ENCODE measurements at regions of chr16 and their contacts with region 1.

Region 1: DNA sequence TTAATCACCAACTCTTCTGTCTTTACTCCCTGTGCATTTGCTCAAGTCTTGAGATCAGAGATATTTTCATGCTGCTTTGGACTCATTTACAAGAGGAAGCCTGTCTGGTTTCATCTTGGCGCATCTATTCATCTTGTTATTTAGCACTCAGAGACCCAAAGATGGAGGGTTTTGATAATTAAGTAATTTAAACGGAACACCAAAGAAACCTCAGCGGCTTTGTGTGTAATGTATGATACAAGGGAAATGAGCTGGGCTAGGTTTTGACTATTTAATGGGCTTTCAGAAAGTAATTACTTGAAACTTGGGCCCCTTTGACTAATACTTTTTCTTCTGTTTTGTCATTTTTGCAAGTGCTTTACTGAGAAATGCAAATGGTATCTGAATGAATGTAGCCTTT is 66.2 kb upstream of the CACNG3 start:
- DNase-seq: no peak
- ATAC-seq: no peak
- H3K4me3 Mint-ChIP-seq: no peak overlapping the region
- H3K27ac Mint-ChIP-seq: no peak overlapping the region
- H3K4me1 Mint-ChIP-seq: peaks cover 16% of the 10 kb centered on the region
- H3K27me3 Mint-ChIP-seq: no peaks in the 10 kb centered on the region
- CTCF ChIP-seq: no peak

Region 2: DNA sequence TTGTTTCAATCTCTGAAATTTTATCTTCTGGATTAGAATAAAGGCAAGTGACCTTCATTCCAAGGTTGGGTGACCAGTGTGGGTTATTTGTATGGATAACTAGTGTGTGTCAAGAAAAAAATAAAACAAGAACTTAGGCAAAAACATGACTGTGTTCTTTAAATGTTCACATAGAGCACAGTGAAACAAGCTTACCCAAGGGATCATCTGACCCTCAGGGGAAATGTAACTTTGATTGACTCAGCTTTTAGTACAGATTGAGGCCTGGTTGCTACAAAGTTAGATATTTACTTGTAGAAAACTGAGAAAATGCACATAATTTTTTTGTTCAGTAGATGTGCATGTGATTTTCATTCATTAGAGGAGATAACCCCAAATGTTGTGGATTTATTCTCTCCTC is 72.9 kb after region 1 on chr16:
- CTCF ChIA-PET with region 1: no interaction called
- POLR2A ChIA-PET with region 1: no interaction called
- DNase-seq: no peak
- ATAC-seq: no peak
- H3K4me3 Mint-ChIP-seq: no peak overlapping the region
- H3K27ac Mint-ChIP-seq: no peak overlapping the region
- H3K4me1 Mint-ChIP-seq: peaks cover 12% of the 10 kb centered on the region
- H3K27me3 Mint-ChIP-seq: peaks cover 28% of the 10 kb centered on the region
- CTCF ChIP-seq: no peak

Region 3: DNA sequence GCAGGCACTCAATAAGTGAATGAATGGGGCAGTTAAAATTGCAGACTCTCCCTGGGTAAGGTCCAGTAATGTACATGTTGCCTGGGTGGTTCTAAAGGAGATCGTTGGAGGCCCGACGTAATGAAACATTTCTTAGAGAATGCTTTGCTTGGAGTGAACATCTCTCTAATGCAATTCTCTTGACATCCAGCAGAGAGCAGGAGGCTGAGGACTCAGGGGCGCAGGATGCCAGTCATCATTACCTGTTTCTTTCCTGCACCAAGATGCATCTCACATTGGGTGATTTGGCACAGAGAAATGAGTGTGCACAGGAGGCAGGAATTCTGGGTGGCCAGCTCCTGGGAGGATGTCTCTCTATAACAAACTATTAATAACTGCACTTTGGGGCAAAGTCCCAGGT is 219.1 kb after region 1 on chr16:
- CTCF ChIA-PET with region 1: no interaction called
- POLR2A ChIA-PET with region 1: no interaction called
- DNase-seq: no peak
- ATAC-seq: peak; percentile 62
- H3K4me3 Mint-ChIP-seq: no peak overlapping the region
- H3K27ac Mint-ChIP-seq: no peak overlapping the region
- H3K4me1 Mint-ChIP-seq: peaks cover 2% of the 10 kb centered on the region; the same call in 1 of the 2 replicates
- H3K27me3 Mint-ChIP-seq: no peaks in the 10 kb centered on the region; the same call in 1 of the 2 replicates
- CTCF ChIP-seq: peak; percentile 26; the same call in 1 of the 2 replicates

Region 4: DNA sequence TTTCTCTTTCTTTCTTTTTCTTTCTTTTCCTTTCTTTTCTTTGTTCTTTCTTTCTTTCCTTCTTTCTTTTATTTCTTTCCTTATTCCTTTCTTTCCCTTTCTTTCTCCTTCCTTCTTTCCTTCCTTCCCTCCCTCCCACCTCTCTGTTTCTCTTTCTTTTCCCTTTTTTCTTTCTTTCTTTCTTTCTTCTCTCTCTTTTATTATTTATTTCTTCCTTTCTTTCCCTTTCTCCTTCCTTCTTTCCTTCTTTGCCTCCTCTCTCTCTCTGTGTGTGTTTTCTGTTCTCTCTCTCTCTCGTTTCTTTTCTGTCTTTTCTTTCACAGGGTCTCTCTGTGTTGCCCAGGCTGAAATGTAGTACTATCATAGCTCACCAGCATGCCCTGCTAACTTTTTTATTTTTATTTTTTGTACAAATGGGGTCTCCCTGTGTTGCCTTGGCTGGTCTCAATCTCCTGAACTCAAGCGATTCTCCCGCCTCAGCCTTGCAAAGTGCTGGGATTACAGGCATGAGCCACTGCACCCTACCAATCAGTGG is 657.3 kb after region 1 on chr16:
- CTCF ChIA-PET with region 1: no interaction called
- POLR2A ChIA-PET with region 1: interaction called, 11 read pairs
- DNase-seq: no peak
- ATAC-seq: no peak
- H3K4me3 Mint-ChIP-seq: no peak overlapping the region
- H3K27ac Mint-ChIP-seq: no peak overlapping the region
- H3K4me1 Mint-ChIP-seq: no peaks in the 10 kb centered on the region
- H3K27me3 Mint-ChIP-seq: no peaks in the 10 kb centered on the region
- CTCF ChIP-seq: no peak